Motor neuron (in vitro differentiated cells): ENCODE measurements at regions of chr1 and their contacts with region 1.

Region 1: DNA sequence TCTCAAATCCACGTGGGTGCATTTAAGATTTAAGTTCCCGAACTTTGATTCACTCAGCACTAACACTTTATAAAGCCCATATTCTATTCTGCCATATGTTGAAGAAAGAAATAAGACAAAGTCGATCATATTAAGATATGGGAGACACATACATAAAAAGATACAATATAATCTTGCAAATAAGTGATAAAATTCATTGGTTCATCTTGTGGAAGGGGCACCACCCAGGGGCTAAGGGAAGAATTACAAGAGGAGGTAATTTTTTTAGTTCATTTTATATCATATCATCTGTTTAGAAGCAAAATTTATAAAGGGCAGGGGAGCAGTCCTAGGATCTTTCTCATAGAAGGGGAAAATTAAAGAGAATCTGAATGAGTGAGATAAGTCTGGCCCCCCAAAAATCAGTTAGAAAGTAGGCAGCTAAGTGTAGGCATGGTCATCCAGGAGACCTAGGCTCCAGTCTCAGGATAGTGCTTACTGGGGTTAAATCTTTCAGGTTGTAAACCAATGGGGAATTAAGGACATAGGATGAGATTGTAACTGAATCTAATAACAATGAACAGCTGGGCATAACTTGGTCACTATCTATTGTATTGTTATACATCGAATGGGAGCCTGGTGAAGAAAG is 124.2 kb upstream of the L1TD1 start:
- ATAC-seq: peak in 1 of 8 experiments; percentile 30
- H3K4me3 ChIP-seq: no peak overlapping the region
- H3K27ac ChIP-seq: no peak overlapping the region
- H3K4me1 ChIP-seq: peaks cover 0 to 2% of the 10 kb centered on the region in 2 donors

Region 2: DNA sequence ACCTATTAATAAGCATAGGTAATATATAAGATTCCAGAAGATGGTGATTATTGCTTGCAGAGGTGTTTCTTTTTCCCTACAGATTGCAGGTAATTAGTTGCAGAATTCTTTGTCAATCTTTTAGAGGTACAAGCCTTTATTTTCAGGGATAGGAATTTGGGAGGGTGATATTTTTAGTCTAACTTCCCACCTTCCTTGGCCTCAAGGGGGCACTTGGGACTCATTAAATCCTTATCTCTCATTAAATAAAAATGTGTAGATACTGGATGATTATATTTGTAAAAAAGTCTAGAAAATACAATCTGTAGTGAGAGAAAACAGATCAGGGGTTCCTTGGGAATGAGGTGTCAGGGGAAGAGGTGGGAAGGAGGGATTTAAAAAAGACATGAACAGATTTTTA is 149.1 kb before region 1 on chr1:
- in situ Hi-C with region 1: loop called in 1 of 9 experiments (anchors 25 kb)
- ATAC-seq: no peak
- H3K4me3 ChIP-seq: no peak overlapping the region
- H3K27ac ChIP-seq: no peak overlapping the region
- H3K4me1 ChIP-seq: no peaks in the 10 kb centered on the region

Region 3: GRCh38 chr1:62194651-62195544 is 124.4 kb after region 1 on chr1 and contains the start of gene L1TD1:
- in situ Hi-C with region 1: no loop called
- ATAC-seq: peak in 3 of 8 experiments; percentile 65 to 95 (median 85)
- H3K4me3 ChIP-seq: no peak within 1 kb of the TSS
- H3K27ac ChIP-seq: no peak within 1 kb of the TSS
- H3K4me1 ChIP-seq: peaks cover 0 to 8% of the 10 kb centered on the region in 2 donors
- total RNA-seq, gene L1TD1: 0.05 to 6.9 (median 2.4) TPM in 7 of 8 experiments, not detected in the other

Region 4: GRCh38 chr1:62295921-62296491 is 225.5 kb after region 1 on chr1:
- in situ Hi-C with region 1: no loop called
- ATAC-seq: peak in 7 of 8 experiments; percentile 18 to 86 (median 72)
- H3K4me3 ChIP-seq: no peak overlapping the region
- H3K27ac ChIP-seq: no peak overlapping the region
- H3K4me1 ChIP-seq: peaks cover 24 to 33% of the 10 kb centered on the region in 2 donors